ENCODE measurements at regions of chr1 and their contacts with region 1.

Region 1: GRCh38 chr1:85244271-85245061 is 15.0 kb downstream of the C1orf52 start:
- DNase-seq: peak; percentile 38 to 87
- H3K4me3 ChIP-seq: no peak overlapping the region
- H3K4me1 ChIP-seq: peaks cover 48% of the 10 kb centered on the region
- H3K27me3 ChIP-seq: no peaks in the 10 kb centered on the region

Region 2: GRCh38 chr1:85111695-85112094 is 132.8 kb before region 1 on chr1:
- in situ Hi-C with region 1: loop called (anchors 5 kb)
- DNase-seq: peak in 1 of 2 experiments; percentile 18
- H3K4me3 ChIP-seq: no peak overlapping the region
- H3K4me1 ChIP-seq: peaks cover 3% of the 10 kb centered on the region; the same call in 1 of the 2 replicates
- H3K27me3 ChIP-seq: no peaks in the 10 kb centered on the region